ENCODE measurements at regions of chr19 and their contacts with region 1.

Region 1: GRCh38 chr19:41263850-41264580 is at the start of gene HNRNPUL1:
- DNase-seq: peak; percentile 100
- H3K4me3 ChIP-seq: peak within 1 kb of the TSS; percentile 89
- H3K27ac ChIP-seq: peak within 1 kb of the TSS; percentile 99
- H3K27me3 ChIP-seq: no peaks in the 10 kb centered on the region
- CTCF ChIP-seq: peak; percentile 36
- polyA plus RNA-seq, gene HNRNPUL1: 42.3 and 56.3 TPM in 2 replicates

Region 2: DNA sequence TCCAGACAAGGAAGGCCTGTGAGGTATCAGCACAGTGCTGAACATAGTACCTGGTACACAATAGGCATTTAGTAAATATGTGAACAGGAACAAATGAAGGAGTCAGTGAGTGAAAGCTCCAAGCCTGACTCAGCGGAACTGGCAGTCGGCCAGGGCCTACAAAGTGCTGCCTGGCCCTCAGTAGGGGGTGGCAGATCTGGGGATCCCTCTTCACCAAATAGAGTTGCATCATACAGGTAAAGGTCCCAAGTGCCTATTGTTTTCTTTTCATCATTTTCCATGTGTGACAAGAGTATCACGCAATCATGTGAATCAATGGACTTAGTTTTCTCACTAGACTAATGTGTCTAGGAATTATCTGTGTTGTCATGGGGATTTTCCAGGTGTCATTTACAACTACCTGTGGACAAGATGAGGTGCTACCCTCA is 263.7 kb before region 1 on chr19:
- CTCF ChIA-PET with region 1: no interaction called
- POLR2A ChIA-PET with region 1: no interaction called
- DNase-seq: no peak
- H3K4me3 ChIP-seq: no peak overlapping the region
- H3K27ac ChIP-seq: no peak overlapping the region
- H3K27me3 ChIP-seq: no peaks in the 10 kb centered on the region
- CTCF ChIP-seq: no peak

Region 3: GRCh38 chr19:41218615-41219507 is 45.2 kb before region 1 on chr19 and contains the start of gene AXL:
- CTCF ChIA-PET with region 1: interaction called, 19 read pairs
- POLR2A ChIA-PET with region 1: interaction called, 15 read pairs
- DNase-seq: no peak
- H3K4me3 ChIP-seq: peak within 1 kb of the TSS; percentile 94
- H3K27ac ChIP-seq: peak within 1 kb of the TSS; percentile 83
- H3K27me3 ChIP-seq: no peaks in the 10 kb centered on the region
- CTCF ChIP-seq: no peak
- polyA plus RNA-seq, gene AXL: 210 and 212 TPM in 2 replicates

Region 4: GRCh38 chr19:41226053-41226873 is 37.8 kb before region 1 on chr19:
- CTCF ChIA-PET with region 1: interaction called, 19 read pairs
- POLR2A ChIA-PET with region 1: interaction called, 16 read pairs
- DNase-seq: peak; percentile 85
- H3K4me3 ChIP-seq: peak overlapping the region; percentile 52
- H3K27ac ChIP-seq: peak overlapping the region; percentile 97
- H3K27me3 ChIP-seq: no peaks in the 10 kb centered on the region
- CTCF ChIP-seq: no peak

Region 5: GRCh38 chr19:41373993-41374392 is 110.0 kb after region 1 on chr19:
- CTCF ChIA-PET with region 1: no interaction called
- POLR2A ChIA-PET with region 1: no interaction called
- DNase-seq: peak; percentile 89
- H3K4me3 ChIP-seq: no peak overlapping the region
- H3K27ac ChIP-seq: peak overlapping the region; percentile 47
- H3K27me3 ChIP-seq: no peaks in the 10 kb centered on the region
- CTCF ChIP-seq: no peak

Region 6: DNA sequence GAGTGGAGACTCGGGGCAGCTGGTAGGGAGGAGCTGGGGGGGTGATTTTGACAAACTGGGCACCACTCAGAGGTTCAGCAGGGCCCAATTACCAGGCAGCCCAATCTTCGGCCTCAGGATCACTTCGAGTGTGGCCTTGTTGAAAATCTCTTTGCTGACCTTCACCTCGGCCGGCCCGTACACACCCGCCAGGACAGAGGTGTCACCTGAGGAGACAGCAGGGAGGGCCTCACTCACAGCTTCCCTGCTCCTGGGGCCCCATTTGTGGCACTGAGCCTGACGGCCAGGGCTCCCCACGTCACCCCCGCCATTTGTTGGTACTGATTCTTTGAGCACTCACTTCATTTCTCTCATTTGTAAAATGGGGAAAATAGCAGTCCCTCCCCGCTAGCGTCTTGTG is 128.8 kb after region 1 on chr19:
- CTCF ChIA-PET with region 1: no interaction called
- POLR2A ChIA-PET with region 1: no interaction called
- DNase-seq: no peak
- H3K4me3 ChIP-seq: no peak overlapping the region
- H3K27ac ChIP-seq: no peak overlapping the region
- H3K27me3 ChIP-seq: no peaks in the 10 kb centered on the region
- CTCF ChIP-seq: no peak

Measured in AG04450 (cell line).